ENCODE measurements at regions of chrX and their contacts with region 1.

Region 1: DNA sequence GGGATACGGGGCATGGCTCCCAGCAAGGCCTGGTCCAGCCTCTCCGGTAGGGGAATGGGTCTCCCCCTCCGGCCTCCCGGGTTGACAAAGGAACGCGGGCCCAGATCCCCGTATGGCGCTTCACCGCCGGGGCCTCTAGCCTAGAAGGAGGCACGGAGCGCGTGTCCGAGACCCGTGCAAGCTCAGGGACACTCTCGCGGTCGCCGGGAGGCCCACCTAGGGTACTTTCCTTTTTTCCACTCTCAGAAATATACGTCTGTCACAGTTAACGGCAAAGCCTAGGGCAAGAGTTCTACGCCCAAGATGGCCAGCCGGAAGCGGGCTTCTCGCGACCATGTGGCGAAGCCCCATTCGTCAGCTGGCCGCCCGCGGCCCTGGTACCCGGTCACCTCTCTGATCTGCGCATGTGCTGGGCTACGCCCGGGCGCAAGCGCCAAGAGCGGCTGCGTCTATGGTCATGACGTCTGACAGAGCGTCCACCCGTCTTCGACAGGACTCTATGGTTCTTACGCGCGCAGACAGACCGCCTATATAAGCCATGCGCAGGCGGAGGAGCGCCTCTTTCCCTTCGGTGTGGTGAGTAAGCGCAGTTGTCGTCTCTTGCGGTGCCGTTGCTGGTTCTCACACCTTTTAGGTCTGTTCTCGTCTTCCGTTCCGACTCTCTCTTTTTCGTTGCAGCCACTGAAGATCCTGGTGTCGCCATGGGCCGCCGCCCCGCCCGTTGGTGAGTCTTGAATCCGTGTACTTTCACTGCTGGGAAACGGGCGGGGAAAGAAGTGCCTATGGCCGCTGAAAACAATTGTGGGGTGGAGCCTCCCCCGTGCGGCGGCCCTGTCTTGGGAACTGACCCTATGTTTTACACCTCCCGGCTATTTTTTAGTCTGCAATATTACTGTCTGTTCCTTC is at the start of gene RPL10:
- DNase-seq: peak; percentile 93
- H3K4me3 Mint-ChIP-seq: peak within 1 kb of the TSS; percentile 92
- H3K27ac Mint-ChIP-seq: peak within 1 kb of the TSS; percentile 97
- H3K4me1 Mint-ChIP-seq: peaks cover 5% of the 10 kb centered on the region
- H3K27me3 Mint-ChIP-seq: no peaks in the 10 kb centered on the region
- CTCF ChIP-seq: no peak
- total RNA-seq, gene RPL10: 3,490 and 3,785 TPM in 2 replicates

Region 2: GRCh38 chrX:154355776-154356140 is 42.3 kb before region 1 on chrX:
- CTCF ChIA-PET with region 1: no interaction called
- POLR2A ChIA-PET with region 1: no interaction called
- intact Hi-C with region 1: no loop called
- DNase-seq: no peak
- H3K4me3 Mint-ChIP-seq: no peak overlapping the region
- H3K27ac Mint-ChIP-seq: no peak overlapping the region
- H3K4me1 Mint-ChIP-seq: peaks cover 5% of the 10 kb centered on the region
- H3K27me3 Mint-ChIP-seq: no peaks in the 10 kb centered on the region
- CTCF ChIP-seq: no peak

Region 3: GRCh38 chrX:154378782-154379591 is 19.1 kb before region 1 on chrX and contains the start of gene EMD:
- CTCF ChIA-PET with region 1: interaction called, 21 read pairs
- POLR2A ChIA-PET with region 1: interaction called, 57 read pairs
- intact Hi-C with region 1: no loop called
- DNase-seq: peak; percentile 94
- H3K4me3 Mint-ChIP-seq: peak within 1 kb of the TSS; percentile 77
- H3K27ac Mint-ChIP-seq: peak within 1 kb of the TSS; percentile 95
- H3K4me1 Mint-ChIP-seq: peaks cover 12% of the 10 kb centered on the region
- H3K27me3 Mint-ChIP-seq: no peaks in the 10 kb centered on the region
- CTCF ChIP-seq: no peak
- total RNA-seq, gene EMD: 94.5 and 107 TPM in 2 replicates

Region 4: DNA sequence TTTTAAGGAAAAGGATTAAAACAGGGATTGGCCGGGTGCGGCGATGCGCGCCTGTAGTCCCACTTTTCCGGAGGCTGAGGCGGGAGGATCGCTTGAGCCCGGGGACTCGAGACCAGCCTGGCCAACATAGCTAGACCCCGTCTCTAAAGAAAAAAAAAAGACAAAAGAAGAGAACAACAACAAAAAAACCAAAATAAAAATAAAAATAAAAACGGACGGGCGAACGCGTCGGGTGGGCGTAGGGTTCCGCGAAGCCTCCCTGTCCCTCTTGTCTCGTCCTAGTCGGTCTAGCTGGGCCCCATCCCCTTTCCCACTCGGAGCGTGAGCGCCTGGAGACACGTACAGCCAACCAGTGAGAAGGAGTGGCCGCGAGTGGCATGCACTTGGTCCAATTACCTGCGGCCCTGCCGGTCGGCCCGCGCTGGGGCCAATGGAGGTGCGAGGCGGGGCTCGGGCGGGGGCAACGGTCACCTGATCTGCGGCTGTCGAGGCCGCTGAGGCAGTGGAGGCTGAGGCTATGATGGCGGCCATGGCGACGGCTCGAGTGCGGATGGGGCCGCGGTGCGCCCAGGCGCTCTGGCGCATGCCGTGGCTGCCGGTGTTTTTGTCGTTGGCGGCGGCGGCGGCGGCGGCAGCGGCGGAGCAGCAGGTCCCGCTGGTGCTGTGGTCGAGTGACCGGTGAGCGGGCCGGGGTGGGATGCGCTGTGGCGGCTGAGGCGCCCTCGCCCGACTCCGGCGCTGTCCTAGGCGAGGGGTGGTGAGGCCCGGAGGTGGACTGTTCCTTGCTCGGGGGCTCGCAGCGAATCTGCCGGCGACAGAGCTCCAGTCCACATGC is 30.3 kb after region 1 on chrX and contains the start of gene ATP6AP1:
- CTCF ChIA-PET with region 1: no interaction called
- POLR2A ChIA-PET with region 1: interaction called, 19 read pairs
- intact Hi-C with region 1: no loop called
- DNase-seq: peak; percentile 89
- H3K4me3 Mint-ChIP-seq: peak within 1 kb of the TSS; percentile 74
- H3K27ac Mint-ChIP-seq: peak within 1 kb of the TSS; percentile 75
- H3K4me1 Mint-ChIP-seq: no peaks in the 10 kb centered on the region
- H3K27me3 Mint-ChIP-seq: peaks cover 15% of the 10 kb centered on the region
- CTCF ChIP-seq: no peak
- total RNA-seq, gene ATP6AP1: 48.7 and 57.0 TPM in 2 replicates

Region 5: DNA sequence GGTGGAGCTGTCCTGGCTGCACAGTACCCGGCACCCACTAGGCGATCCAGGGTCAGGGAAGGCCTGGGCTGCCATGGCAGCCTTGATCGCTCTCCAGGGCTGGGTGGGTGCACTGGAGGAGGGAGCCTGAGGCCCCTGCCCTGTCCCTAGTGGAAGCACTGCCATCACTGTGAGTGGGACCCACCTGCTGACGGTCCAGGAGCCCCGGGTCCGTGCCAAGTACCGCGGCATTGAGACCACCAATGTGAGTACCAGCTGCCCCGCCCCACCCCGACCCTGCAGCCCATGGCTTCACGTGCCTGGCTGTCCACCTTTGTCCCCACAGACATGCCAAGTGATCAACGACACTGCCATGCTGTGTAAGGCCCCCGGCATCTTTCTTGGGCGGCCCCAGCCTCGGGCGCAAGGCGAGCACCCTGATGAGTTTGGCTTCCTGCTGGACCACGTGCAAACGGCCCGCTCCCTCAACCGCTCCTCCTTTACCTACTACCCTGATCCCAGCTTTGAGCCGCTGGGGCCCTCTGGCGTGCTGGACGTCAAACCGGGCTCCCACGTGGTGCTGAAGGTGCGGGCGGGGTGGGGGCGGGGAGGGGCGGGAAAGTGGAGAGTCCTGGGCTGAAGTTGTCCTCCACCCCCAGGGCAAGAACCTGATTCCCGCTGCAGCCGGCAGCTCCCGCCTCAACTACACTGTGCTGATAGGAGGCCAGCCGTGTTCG is 69.0 kb after region 1 on chrX:
- CTCF ChIA-PET with region 1: no interaction called
- POLR2A ChIA-PET with region 1: no interaction called
- intact Hi-C with region 1: no loop called
- DNase-seq: no peak
- H3K4me3 Mint-ChIP-seq: no peak overlapping the region
- H3K27ac Mint-ChIP-seq: no peak overlapping the region
- H3K4me1 Mint-ChIP-seq: no peaks in the 10 kb centered on the region
- H3K27me3 Mint-ChIP-seq: peaks cover 2% of the 10 kb centered on the region
- CTCF ChIP-seq: no peak

Region 6: GRCh38 chrX:154526901-154527675 is 129.0 kb after region 1 on chrX:
- CTCF ChIA-PET with region 1: no interaction called
- POLR2A ChIA-PET with region 1: interaction called, 23 read pairs
- intact Hi-C with region 1: loop called (anchors 5 kb)
- DNase-seq: peak; percentile 84
- H3K4me3 Mint-ChIP-seq: peak overlapping the region; percentile 29
- H3K27ac Mint-ChIP-seq: peak overlapping the region; percentile 88
- H3K4me1 Mint-ChIP-seq: peaks cover 10% of the 10 kb centered on the region
- H3K27me3 Mint-ChIP-seq: no peaks in the 10 kb centered on the region
- CTCF ChIP-seq: peak; percentile 43

Region 7: GRCh38 chrX:154593201-154593600 is 195.1 kb after region 1 on chrX:
- CTCF ChIA-PET with region 1: no interaction called
- POLR2A ChIA-PET with region 1: no interaction called
- intact Hi-C with region 1: no loop called
- DNase-seq: no peak
- H3K4me3 Mint-ChIP-seq: no peak overlapping the region
- H3K27ac Mint-ChIP-seq: no peak overlapping the region
- H3K4me1 Mint-ChIP-seq: peaks cover 30% of the 10 kb centered on the region
- H3K27me3 Mint-ChIP-seq: no peaks in the 10 kb centered on the region
- CTCF ChIP-seq: no peak

Measured in MCF 10A (cell line).